Dendritic cell treated with granulocyte-macrophage colony-stimulating factor and Interleukin-4, amounts not matched to agents 40 ng/mL and 50 ng/mL, for 4 days (primary cell): ENCODE measurements at regions of chr17 and their contacts with region 1.

Region 1: DNA sequence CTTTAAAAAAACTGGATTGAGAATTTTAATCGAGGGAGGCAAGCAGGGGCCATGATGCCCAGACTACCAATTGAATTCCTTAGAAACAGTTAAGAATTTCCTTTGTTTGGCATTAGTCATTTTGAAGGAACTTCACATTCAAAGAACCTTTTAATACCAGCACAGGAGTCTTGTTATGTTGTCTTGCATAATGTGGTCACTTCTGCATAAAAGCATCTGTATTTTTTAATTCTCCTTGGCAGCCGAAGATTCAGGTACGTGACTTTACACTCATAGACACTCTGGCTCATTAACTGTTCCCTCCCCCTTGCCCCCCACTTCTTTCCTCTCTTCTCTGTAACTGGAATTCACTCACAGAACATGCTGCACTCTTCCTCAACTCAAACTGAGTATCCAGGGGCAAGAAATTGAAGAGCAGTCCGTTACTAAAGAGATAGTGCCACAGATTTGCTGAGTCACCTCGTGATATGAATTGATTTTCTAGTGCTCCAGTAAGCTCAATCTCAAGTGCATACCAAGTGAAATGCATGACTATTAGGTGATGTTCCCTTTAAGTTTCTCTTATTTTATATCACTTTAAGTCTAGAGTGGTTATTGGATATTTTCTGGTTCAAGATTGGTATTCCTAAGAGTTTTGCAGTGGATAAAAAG is 572.2 kb upstream of the SOX9 start:
- H3K4me3 Mint-ChIP-seq: no peak overlapping the region
- H3K27ac Mint-ChIP-seq: no peak overlapping the region
- H3K4me1 Mint-ChIP-seq: no peaks in the 10 kb centered on the region
- H3K27me3 Mint-ChIP-seq: no peaks in the 10 kb centered on the region

Region 2: DNA sequence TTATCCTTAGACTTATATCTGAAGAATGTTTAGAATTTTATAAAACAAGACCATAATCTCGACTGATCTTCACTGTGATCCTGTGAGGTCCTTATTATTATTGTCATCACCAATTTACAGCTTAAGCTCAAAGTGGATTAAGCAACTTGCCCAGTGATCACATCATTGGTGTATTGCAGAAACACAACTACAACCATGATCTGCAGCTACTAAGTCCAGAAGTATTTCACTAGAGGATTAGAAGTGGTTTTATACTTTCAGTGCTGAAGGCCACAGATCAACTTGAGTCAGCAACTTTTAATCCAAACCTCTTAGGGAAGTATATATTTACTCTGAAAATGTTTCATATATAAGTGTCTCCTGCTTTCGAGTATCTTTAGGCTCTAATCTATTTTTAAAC is 52.1 kb before region 1 on chr17:
- intact Hi-C with region 1: loop called (anchors 5 kb)
- H3K4me3 Mint-ChIP-seq: no peak overlapping the region
- H3K27ac Mint-ChIP-seq: no peak overlapping the region
- H3K4me1 Mint-ChIP-seq: no peaks in the 10 kb centered on the region
- H3K27me3 Mint-ChIP-seq: no peaks in the 10 kb centered on the region